Psoas muscle (tissue), 8 donors: ENCODE measurements at regions of chr1 and their contacts with region 1.

Region 1: GRCh38 chr1:181134543-181135362 is 46.3 kb downstream of the IER5 start:
- DNase-seq: no peak
- ATAC-seq: peak; percentile 38 to 86 (median 62)
- H3K4me3 ChIP-seq: no peak overlapping the region
- H3K27ac ChIP-seq: peak overlapping the region; percentile 50
- H3K4me1 ChIP-seq: peaks cover 18% of the 10 kb centered on the region
- H3K27me3 ChIP-seq: no peaks in the 10 kb centered on the region
- CTCF ChIP-seq: no peak

Region 2: DNA sequence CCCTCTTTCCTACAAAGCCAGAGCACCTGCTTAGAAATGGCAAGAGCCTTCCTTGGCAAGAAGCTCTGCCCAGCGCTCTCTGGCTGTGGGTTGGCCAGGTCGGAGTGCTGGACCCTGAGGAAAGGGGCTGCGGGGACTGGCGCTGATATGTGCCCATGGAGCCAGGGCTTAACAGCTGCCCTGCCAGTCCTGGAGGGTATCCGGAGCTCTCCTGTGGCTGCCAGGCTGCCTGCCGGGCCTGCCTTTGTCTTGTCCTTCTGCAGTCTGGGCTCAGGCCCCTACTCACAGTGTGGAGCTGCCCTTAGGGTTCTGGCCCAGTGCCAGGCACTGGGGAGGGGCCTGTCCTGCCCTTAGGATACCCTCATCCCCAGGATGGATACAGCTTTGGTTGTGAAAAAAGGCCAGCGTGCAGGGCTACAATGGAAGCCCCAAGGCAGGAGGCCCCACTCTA is 178.7 kb before region 1 on chr1:
- intact Hi-C with region 1: loop called in 1 of 2 experiments (anchors 5 kb)
- DNase-seq: peak in 1 of 2 donors; percentile 66
- ATAC-seq: peak; percentile 41 to 71 (median 56)
- H3K4me3 ChIP-seq: no peak overlapping the region
- H3K27ac ChIP-seq: peak overlapping the region; percentile 71
- H3K4me1 ChIP-seq: peaks cover 39% of the 10 kb centered on the region
- H3K27me3 ChIP-seq: no peaks in the 10 kb centered on the region
- CTCF ChIP-seq: no peak

Region 3: DNA sequence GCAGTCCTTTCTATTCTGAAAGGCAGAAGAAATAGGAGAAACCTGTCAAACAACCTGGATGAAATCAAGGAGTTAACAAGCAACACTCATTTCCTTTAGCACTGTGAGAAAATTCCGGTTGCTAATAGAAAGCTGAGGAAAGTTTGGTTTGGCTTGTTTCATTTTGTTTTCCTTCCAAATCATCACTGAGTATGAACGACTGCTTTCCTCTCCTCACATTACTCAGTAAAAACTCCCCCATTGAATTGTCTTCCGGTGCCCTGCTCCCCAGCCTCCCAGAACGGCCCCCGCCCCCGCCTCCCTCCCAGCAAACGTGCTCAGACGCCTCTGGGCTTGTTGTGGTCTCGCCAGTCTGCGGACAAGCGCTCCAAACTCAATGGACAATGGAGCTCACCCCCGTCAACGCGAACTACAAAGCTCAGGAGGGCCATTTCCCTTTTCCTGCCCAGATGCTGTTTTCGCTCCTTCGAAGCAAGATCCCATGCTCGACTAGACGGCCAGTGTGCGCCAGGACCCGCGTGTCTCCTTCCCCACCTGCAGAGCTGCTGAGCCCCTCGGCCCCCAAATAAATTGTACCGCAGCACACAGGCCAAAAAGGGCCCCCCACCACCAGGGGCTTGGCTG is 112.8 kb before region 1 on chr1:
- intact Hi-C with region 1: no loop called
- DNase-seq: peak; percentile 68 to 70
- ATAC-seq: peak; percentile 39 to 69 (median 52)
- H3K4me3 ChIP-seq: peak overlapping the region; percentile 74
- H3K27ac ChIP-seq: peak overlapping the region; percentile 90
- H3K4me1 ChIP-seq: peaks cover 18% of the 10 kb centered on the region
- H3K27me3 ChIP-seq: no peaks in the 10 kb centered on the region
- CTCF ChIP-seq: no peak

Region 4: DNA sequence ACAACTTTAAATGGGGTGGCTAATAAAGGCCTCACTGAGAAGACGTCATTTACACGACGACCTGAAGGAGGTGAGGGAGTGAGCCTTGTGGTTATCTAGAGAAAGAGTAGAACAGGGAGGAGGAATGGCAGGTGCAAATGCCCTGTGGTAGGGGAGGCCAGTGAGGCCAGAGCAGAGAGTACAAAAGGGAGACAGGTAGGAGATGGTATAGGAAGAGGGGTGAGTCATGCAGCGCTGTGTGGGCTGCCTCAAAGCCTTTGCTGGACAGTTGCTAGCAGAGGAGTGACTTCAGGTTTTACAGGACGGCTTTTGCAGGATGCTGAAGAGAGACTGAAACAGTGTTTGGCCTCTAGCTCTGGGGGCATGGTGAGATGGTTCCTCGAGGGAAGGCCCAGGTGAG is 69.8 kb after region 1 on chr1:
- intact Hi-C with region 1: no loop called
- DNase-seq: no peak
- ATAC-seq: no peak
- H3K4me3 ChIP-seq: no peak overlapping the region
- H3K27ac ChIP-seq: no peak overlapping the region
- H3K4me1 ChIP-seq: peaks cover 22% of the 10 kb centered on the region
- H3K27me3 ChIP-seq: no peaks in the 10 kb centered on the region
- CTCF ChIP-seq: no peak

Region 5: GRCh38 chr1:181219938-181220337 is 85.2 kb after region 1 on chr1:
- intact Hi-C with region 1: no loop called
- DNase-seq: no peak
- ATAC-seq: no peak
- H3K4me3 ChIP-seq: no peak overlapping the region
- H3K27ac ChIP-seq: no peak overlapping the region
- H3K4me1 ChIP-seq: no peaks in the 10 kb centered on the region
- H3K27me3 ChIP-seq: no peaks in the 10 kb centered on the region
- CTCF ChIP-seq: no peak